ENCODE measurements at regions of chr1 and their contacts with region 1.

Region 1: GRCh38 chr1:151968058-151968457 is 25.6 kb downstream of the S100A10 start:
- DNase-seq: peak; percentile 75
- ATAC-seq: peak; percentile 92
- H3K4me3 Mint-ChIP-seq: no peak overlapping the region
- H3K27ac Mint-ChIP-seq: peak overlapping the region; percentile 47
- H3K4me1 Mint-ChIP-seq: peaks cover 17% of the 10 kb centered on the region
- H3K27me3 Mint-ChIP-seq: peaks cover 12% of the 10 kb centered on the region

Region 2: GRCh38 chr1:151924679-151925587 is 43.1 kb before region 1 on chr1:
- CTCF ChIA-PET with region 1: interaction called, 11 read pairs
- DNase-seq: no peak
- ATAC-seq: peak; percentile 36
- H3K4me3 Mint-ChIP-seq: no peak overlapping the region
- H3K27ac Mint-ChIP-seq: peak overlapping the region; percentile 74
- H3K4me1 Mint-ChIP-seq: peaks cover 20% of the 10 kb centered on the region
- H3K27me3 Mint-ChIP-seq: peaks cover 2% of the 10 kb centered on the region

Region 3: DNA sequence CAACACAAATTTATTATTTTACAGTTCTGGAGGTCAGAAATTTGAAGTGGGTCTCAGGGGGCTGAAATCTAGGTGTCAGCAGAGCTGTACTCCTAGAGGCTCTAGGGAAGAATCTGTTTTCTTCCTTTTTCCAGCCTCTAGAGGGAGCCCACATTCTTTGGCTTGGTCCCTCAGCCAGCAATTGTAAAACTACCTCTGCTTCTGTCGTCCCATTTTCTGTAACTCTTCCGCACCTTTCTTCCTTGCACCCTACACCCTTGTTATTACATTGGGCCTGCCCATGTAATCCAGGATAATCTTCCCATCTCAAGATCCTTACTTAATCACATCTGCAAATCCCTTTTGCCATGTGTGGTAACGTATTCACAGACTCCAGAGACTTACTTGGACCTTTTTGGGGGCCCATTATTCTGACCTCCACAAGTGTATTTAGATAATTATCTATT is 34.0 kb before region 1 on chr1:
- CTCF ChIA-PET with region 1: interaction called, 98 read pairs
- DNase-seq: peak; percentile 58
- ATAC-seq: peak; percentile 92
- H3K4me3 Mint-ChIP-seq: no peak overlapping the region
- H3K27ac Mint-ChIP-seq: no peak overlapping the region
- H3K4me1 Mint-ChIP-seq: peaks cover 2% of the 10 kb centered on the region
- H3K27me3 Mint-ChIP-seq: peaks cover 4% of the 10 kb centered on the region

Region 4: GRCh38 chr1:151945725-151946364 is 22.2 kb before region 1 on chr1:
- CTCF ChIA-PET with region 1: interaction called, 15 read pairs
- DNase-seq: peak; percentile 94
- ATAC-seq: peak; percentile 83
- H3K4me3 Mint-ChIP-seq: peak overlapping the region; percentile 54
- H3K27ac Mint-ChIP-seq: peak overlapping the region; percentile 88
- H3K4me1 Mint-ChIP-seq: peaks cover 34% of the 10 kb centered on the region
- H3K27me3 Mint-ChIP-seq: no peaks in the 10 kb centered on the region

Region 5: GRCh38 chr1:151984313-151984956 is 16.4 kb after region 1 on chr1:
- CTCF ChIA-PET with region 1: interaction called, 522 read pairs
- DNase-seq: peak; percentile 87
- ATAC-seq: peak; percentile 89
- H3K4me3 Mint-ChIP-seq: peak overlapping the region; percentile 56
- H3K27ac Mint-ChIP-seq: peak overlapping the region; percentile 85
- H3K4me1 Mint-ChIP-seq: peaks cover 68% of the 10 kb centered on the region
- H3K27me3 Mint-ChIP-seq: no peaks in the 10 kb centered on the region

Region 6: DNA sequence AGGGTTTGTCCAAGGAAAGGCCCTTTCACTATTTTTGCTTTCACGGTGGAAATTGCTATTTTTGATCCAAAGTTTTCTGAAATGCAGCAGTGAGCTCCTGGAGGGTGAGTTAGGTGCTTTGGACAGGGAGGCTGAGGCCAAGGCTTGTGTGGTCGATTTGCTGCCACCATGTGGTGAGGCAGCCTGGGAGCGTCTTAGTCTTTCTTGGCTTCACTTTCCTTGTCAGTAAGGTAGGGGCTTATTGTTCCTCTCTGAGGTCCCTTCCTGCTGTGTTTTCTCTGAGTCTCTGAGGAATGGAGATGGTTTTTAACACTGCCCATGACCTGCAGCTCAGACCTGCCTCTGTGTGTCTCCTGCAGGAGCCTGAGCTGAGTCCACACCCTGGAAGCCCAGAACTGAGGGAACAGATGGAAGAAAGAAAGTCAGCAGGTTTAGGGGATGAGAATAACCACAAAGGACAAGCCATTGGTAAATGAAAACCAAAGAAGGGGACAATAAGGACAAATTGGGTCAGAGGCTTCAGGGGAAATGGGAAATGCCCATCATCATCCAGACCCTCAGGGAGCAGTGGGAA is 45.7 kb after region 1 on chr1:
- CTCF ChIA-PET with region 1: interaction called, 45 read pairs
- DNase-seq: peak; percentile 72
- ATAC-seq: peak; percentile 51
- H3K4me3 Mint-ChIP-seq: no peak overlapping the region
- H3K27ac Mint-ChIP-seq: no peak overlapping the region
- H3K4me1 Mint-ChIP-seq: peaks cover 5% of the 10 kb centered on the region
- H3K27me3 Mint-ChIP-seq: peaks cover 21% of the 10 kb centered on the region

Region 7: GRCh38 chr1:152034646-152035405 is 66.8 kb after region 1 on chr1:
- CTCF ChIA-PET with region 1: interaction called, 22 read pairs
- DNase-seq: peak; percentile 83
- ATAC-seq: peak; percentile 72
- H3K4me3 Mint-ChIP-seq: peak overlapping the region; percentile 96
- H3K27ac Mint-ChIP-seq: peak overlapping the region; percentile 94
- H3K4me1 Mint-ChIP-seq: peaks cover 40% of the 10 kb centered on the region
- H3K27me3 Mint-ChIP-seq: no peaks in the 10 kb centered on the region

Region 8: DNA sequence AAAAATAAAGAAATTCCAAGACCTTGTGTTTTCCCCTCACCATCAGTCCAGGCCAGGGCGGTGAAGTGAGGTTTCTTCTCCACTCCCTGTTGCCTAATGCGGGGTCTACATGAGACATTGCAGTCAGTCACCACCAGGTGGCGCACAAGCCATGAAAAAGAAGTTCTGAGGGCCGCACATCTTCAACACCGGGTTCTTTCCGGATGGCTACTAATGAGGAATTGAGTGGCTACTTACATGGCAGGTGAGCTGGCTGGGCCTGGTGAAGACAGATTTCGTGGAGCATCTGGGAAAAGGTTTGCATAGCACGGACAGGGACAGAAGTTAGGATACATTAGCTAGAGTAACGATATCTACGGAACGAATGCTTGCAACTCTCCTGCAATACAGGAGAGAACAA is 84.5 kb after region 1 on chr1:
- CTCF ChIA-PET with region 1: no interaction called
- DNase-seq: peak; percentile 89
- ATAC-seq: no peak
- H3K4me3 Mint-ChIP-seq: no peak overlapping the region
- H3K27ac Mint-ChIP-seq: no peak overlapping the region
- H3K4me1 Mint-ChIP-seq: peaks cover 21% of the 10 kb centered on the region
- H3K27me3 Mint-ChIP-seq: peaks cover 37% of the 10 kb centered on the region